ENCODE measurements at regions of chr5 and their contacts with region 1.

Region 1: GRCh38 chr5:36630201-36631145 is 24.1 kb downstream of the SLC1A3 start:
- DNase-seq: peak; percentile 47
- ATAC-seq: no peak; the same call in 1 of the 2 replicates
- H3K4me3 ChIP-seq: no peak overlapping the region
- H3K27ac ChIP-seq: no peak overlapping the region
- H3K4me1 ChIP-seq: no peaks in the 10 kb centered on the region
- H3K27me3 ChIP-seq: peaks cover 1% of the 10 kb centered on the region; the same call in 1 of the 2 replicates
- CTCF ChIP-seq: no peak
- POLR2A ChIP-seq: no peak
- RAD21 ChIP-seq: no peak

Region 2: DNA sequence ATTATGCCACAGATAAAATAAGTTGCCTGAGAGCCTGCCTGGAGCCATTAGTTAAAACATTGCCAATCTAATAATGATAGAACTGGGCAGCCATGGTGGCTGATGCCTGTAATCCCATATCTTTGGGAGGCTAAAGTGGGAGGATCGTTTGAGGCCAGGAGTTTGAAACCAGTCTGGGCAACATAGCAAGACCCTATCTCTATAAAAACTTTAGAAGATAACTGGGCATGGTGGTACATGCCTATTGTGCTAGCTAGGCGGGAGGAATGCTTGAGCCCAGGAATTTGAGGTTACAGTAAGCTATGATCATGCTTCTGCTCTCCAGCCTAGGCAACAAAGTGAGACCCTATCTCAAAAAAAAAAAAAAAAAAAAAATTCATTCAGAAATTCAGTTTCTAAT is 1921.7 kb before region 1 on chr5:
- CTCF ChIA-PET with region 1: no interaction called
- POLR2A ChIA-PET with region 1: interaction called, 13 read pairs
- dilution Hi-C with region 1: no loop called
- in situ Hi-C with region 1: no loop called
- intact Hi-C with region 1: no loop called
- DNase-seq: no peak
- ATAC-seq: no peak
- H3K4me3 ChIP-seq: no peak overlapping the region
- H3K27ac ChIP-seq: peak overlapping the region; percentile 89
- H3K4me1 ChIP-seq: peaks cover 28% of the 10 kb centered on the region
- H3K27me3 ChIP-seq: no peaks in the 10 kb centered on the region
- CTCF ChIP-seq: no peak
- POLR2A ChIP-seq: no peak
- RAD21 ChIP-seq: no peak

Region 3: DNA sequence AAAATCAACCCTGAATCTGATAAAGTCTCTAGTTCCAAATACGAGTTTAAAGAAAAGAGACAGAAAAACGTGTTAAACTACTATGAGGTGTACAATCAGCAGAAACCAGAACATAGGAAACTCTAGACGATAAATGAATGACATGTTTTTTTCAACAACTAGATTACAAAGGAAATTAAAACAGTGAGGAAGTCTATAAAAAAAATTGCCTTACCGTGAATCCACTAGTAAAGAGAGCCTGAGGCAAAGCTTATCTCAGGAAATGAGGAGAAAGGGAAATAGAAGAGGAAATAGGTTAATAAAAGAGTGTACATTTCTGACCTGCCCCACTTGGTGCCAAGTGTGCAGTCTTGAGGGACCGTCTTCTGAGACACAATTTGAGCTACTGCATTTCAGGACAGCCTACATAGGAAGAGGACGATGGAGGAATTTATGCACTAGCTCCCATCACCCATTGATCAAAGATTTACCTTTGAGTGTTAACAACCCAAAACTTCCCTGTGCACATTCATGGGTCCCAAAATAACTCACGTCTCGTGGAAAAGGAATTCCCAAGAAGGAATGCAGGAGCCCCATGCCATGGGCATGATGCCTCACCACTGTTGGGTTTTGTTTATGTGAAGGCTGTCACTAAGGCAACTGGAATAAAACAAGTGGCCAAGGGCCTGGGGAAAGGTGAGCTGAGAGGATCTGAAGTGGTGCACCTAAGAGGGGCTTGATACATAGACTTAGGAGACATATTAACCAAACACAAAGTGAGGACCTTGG is 77.7 kb before region 1 on chr5:
- CTCF ChIA-PET with region 1: no interaction called
- POLR2A ChIA-PET with region 1: no interaction called
- dilution Hi-C with region 1: no loop called
- in situ Hi-C with region 1: no loop called
- intact Hi-C with region 1: no loop called
- DNase-seq: no peak
- ATAC-seq: no peak
- H3K4me3 ChIP-seq: no peak overlapping the region
- H3K27ac ChIP-seq: no peak overlapping the region
- H3K4me1 ChIP-seq: no peaks in the 10 kb centered on the region
- H3K27me3 ChIP-seq: no peaks in the 10 kb centered on the region
- CTCF ChIP-seq: no peak
- POLR2A ChIP-seq: no peak
- RAD21 ChIP-seq: no peak

Region 4: GRCh38 chr5:36590513-36591286 is 39.8 kb before region 1 on chr5:
- CTCF ChIA-PET with region 1: interaction called, 3 read pairs
- POLR2A ChIA-PET with region 1: no interaction called
- dilution Hi-C with region 1: no loop called
- in situ Hi-C with region 1: no loop called
- intact Hi-C with region 1: loop called (anchors 1 kb)
- DNase-seq: no peak
- ATAC-seq: no peak
- H3K4me3 ChIP-seq: no peak overlapping the region
- H3K27ac ChIP-seq: no peak overlapping the region
- H3K4me1 ChIP-seq: no peaks in the 10 kb centered on the region
- H3K27me3 ChIP-seq: peaks cover 6% of the 10 kb centered on the region
- CTCF ChIP-seq: no peak
- POLR2A ChIP-seq: no peak
- RAD21 ChIP-seq: no peak

Region 5: DNA sequence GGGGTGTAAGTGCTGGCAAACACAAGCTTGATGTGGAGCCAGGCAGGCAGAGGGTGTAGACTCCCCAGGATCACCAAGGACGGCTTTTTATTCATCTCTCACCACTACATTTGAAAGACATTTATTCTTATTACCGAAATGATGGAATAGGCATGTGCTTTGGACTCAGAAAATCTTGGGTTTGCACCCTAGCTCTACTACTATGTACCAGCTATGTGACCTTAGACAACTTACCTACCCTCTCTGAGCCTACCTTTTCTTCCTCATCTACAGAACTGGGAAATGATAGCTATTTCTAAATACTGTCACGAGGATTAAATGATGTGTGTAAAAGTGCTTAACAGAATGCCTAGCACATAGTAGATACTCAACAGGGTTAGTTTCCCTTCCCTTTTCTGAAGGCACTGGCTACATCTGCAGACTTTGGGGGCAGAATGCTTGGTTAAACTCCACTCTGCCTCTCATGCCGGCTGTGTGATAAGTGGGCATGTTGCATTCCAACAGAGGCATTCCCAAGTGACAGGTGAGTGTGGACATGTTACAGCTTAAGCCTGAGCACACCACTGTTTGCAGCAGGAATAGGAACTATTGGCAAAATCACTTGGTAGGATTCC is 70.7 kb after region 1 on chr5:
- CTCF ChIA-PET with region 1: no interaction called
- POLR2A ChIA-PET with region 1: no interaction called
- dilution Hi-C with region 1: no loop called
- in situ Hi-C with region 1: no loop called
- intact Hi-C with region 1: no loop called
- DNase-seq: no peak
- ATAC-seq: no peak
- H3K4me3 ChIP-seq: no peak overlapping the region
- H3K27ac ChIP-seq: no peak overlapping the region
- H3K4me1 ChIP-seq: no peaks in the 10 kb centered on the region
- H3K27me3 ChIP-seq: peaks cover 41% of the 10 kb centered on the region
- CTCF ChIP-seq: no peak
- POLR2A ChIP-seq: no peak
- RAD21 ChIP-seq: no peak

Measured in IMR-90 (cell line).